SK-N-SH (cell line): ENCODE measurements at regions of chr10 and their contacts with region 1.

Region 1: DNA sequence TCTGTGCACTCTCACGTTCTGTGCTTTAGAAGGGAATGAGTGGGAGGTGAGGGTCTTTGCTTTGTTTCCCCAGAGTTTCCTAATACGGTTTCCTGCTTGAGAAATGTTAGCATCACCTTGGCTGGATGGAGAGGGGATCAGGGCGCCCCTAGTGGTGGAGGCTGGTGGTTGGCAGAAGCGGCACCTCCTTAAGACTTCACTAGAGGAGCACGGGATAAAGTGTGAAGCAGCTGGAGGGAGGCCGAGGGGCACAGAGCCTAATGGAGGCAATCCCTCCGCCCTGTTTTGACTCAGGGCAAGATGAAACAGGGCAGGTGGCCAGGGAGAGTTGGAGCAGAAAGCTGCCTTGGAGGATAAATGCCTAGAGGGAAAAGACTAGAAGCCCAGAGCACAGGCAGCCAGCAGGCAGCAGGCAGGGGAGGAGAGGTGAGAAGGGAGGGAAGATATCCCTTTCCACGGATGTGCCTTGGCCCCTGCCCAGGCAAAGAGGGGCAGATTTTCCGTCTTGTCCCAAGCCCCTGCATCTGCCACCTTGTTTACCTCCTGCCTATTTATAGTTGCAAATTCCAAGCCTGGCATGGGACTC is 56.0 kb upstream of the BTRC start:
- DNase-seq: peak; percentile 61
- H3K4me3 ChIP-seq: peak overlapping the region in 1 of 2 experiments; percentile 33; a peak in 1 of 4 replicates
- H3K27ac ChIP-seq: no peak overlapping the region
- H3K4me1 ChIP-seq: peaks cover 0 to 5% of the 10 kb centered on the region in 2 experiments; a peak in 1 of 4 replicates
- H3K27me3 ChIP-seq: peaks cover 29% of the 10 kb centered on the region; the same call in 1 of the 2 replicates
- CTCF ChIP-seq: peak; percentile 78
- EP300 ChIP-seq: no peak
- RAD21 ChIP-seq: peak; percentile 29

Region 2: GRCh38 chr10:101152316-101152715 is 145.7 kb before region 1 on chr10:
- CTCF ChIA-PET with region 1: no interaction called
- POLR2A ChIA-PET with region 1: no interaction called
- DNase-seq: no peak
- H3K4me3 ChIP-seq: no peak overlapping the region
- H3K27ac ChIP-seq: no peak overlapping the region
- H3K4me1 ChIP-seq: no peaks in the 10 kb centered on the region
- H3K27me3 ChIP-seq: peaks cover 67% of the 10 kb centered on the region
- CTCF ChIP-seq: no peak
- EP300 ChIP-seq: no peak
- RAD21 ChIP-seq: no peak

Region 3: GRCh38 chr10:101182936-101183335 is 115.1 kb before region 1 on chr10:
- CTCF ChIA-PET with region 1: no interaction called
- POLR2A ChIA-PET with region 1: no interaction called
- DNase-seq: no peak
- H3K4me3 ChIP-seq: no peak overlapping the region
- H3K27ac ChIP-seq: no peak overlapping the region
- H3K4me1 ChIP-seq: no peaks in the 10 kb centered on the region
- H3K27me3 ChIP-seq: peaks cover 18% of the 10 kb centered on the region; the same call in 1 of the 2 replicates
- CTCF ChIP-seq: no peak
- EP300 ChIP-seq: no peak
- RAD21 ChIP-seq: no peak

Region 4: GRCh38 chr10:101311185-101312066 is 13.4 kb after region 1 on chr10:
- CTCF ChIA-PET with region 1: interaction called, 38 read pairs
- POLR2A ChIA-PET with region 1: interaction called, 5 read pairs
- DNase-seq: peak; percentile 49
- H3K4me3 ChIP-seq: no peak overlapping the region
- H3K27ac ChIP-seq: peak overlapping the region in 1 of 2 experiments; percentile 32; a peak in 1 of 4 replicates
- H3K4me1 ChIP-seq: peaks cover 0 to 12% of the 10 kb centered on the region in 2 experiments; a peak in 1 of 4 replicates
- H3K27me3 ChIP-seq: peaks cover 3% of the 10 kb centered on the region; the same call in 1 of the 2 replicates
- CTCF ChIP-seq: no peak
- EP300 ChIP-seq: no peak
- RAD21 ChIP-seq: no peak

Region 5: DNA sequence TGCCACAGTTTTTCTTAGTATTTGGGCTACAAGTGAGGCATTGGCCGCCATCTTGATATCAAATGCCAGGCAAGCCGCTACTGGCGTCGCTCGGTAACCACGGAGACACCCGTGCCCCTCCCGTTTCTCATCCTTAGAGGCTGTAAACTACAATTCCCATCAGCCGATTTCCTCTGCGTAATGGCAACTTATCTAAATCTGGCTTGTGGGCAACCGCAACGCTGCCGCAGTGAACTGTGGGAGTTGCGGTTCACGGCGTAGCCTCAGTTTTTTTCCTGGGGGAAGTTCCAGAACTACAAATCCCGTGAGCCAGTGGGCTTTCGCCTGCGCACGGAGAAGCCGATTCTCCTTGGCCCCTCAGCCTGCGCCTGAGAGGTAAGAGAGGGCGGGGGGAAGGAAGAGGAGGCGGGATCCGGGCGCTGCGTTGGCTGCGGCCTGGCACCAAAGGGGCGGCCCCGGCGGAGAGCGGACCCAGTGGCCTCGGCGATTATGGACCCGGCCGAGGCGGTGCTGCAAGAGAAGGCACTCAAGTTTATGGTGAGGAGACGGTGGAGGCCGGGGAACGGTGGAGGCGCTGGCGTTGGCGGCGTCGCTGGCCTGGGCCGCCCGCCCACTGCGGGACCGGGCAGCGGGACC is 55.8 kb after region 1 on chr10 and contains the start of gene BTRC:
- CTCF ChIA-PET with region 1: interaction called, 20 read pairs
- POLR2A ChIA-PET with region 1: interaction called, 12 read pairs
- DNase-seq: peak; percentile 93
- H3K4me3 ChIP-seq: peak within 1 kb of the TSS; percentile 66 to 84
- H3K27ac ChIP-seq: peak within 1 kb of the TSS; percentile 83 to 89
- H3K4me1 ChIP-seq: peaks cover 7 to 9% of the 10 kb centered on the region in 2 experiments; a peak in 3 of 4 replicates
- H3K27me3 ChIP-seq: no peaks in the 10 kb centered on the region; the same call in 1 of the 2 replicates
- CTCF ChIP-seq: no peak
- EP300 ChIP-seq: no peak
- RAD21 ChIP-seq: no peak; the same call in 1 of the 2 replicates
- polyA plus RNA-seq, gene BTRC: 6.5 and 8.1 TPM in 2 replicates